Cardiac septum (tissue), 1 donor: ENCODE measurements at regions of chr18 and their contacts with region 1.

Region 1: GRCh38 chr18:45384137-45384961 is 230.9 kb upstream of the SLC14A2 start:
- DNase-seq: no peak

Region 2: DNA sequence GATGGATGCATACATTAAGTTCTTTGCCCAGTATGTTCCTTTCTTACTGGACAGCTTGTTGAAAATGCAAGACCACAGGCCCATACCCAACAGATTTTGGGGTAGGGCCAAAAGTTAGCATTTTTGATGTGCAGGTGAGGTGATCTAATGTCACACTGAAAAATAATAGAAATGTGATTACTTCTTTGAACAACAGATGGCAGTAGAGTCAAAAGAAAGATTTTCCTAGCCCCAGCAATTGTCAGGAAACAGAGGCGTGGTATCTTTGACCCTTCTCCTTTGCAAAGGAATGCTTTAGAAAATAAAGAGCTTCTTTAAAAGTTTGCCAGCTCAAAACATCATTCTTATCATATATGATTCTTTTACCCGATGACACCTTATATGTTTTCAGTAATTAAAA is 1763.4 kb before region 1 on chr18:
- intact Hi-C with region 1: loop called (anchors 10 kb)
- DNase-seq: no peak

Region 3: GRCh38 chr18:43789234-43790000 is 1594.9 kb before region 1 on chr18:
- intact Hi-C with region 1: loop called (anchors 10 kb)
- DNase-seq: no peak

Region 4: DNA sequence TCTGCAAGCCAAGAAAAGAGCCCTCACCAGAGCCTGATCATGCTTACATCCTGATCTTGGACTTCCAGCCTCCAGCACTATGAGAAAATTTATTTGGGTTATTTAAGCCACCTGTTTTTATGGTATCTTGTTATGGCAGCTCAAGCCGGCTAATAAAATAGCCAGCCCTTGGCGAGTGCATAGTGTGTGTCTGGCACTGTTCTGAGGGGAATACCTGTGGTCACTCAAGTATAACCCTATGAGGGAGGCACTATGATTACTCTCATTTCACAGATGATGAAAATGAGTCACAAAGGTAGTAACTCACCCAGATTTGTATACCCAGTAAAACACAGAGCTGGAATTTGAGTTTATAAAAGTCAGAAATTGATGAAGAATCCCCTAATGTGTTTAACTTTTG is 1260.6 kb before region 1 on chr18:
- intact Hi-C with region 1: loop called (anchors 10 kb)
- DNase-seq: no peak

Region 5: DNA sequence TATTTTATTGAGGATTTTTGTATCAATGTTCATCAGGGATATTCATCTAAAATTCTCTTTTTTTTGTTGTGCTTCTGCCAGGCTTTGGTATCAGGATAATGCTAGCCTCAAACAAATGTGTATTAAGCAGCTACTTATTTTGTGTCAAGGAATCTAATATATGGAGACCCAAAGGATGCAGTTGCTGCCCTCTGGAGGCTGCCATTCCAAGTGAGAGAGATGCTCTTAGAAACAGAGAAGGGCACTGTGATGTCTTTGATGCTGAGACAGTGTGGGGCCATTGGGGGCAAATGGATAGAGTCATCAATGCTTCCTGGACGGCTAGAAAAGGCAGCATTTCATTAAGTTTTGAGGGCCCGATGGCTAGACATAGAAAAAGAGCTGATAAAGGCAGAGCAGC is 411.1 kb before region 1 on chr18:
- intact Hi-C with region 1: no loop called
- DNase-seq: no peak

Region 6: GRCh38 chr18:45416168-45416567 is 31.8 kb after region 1 on chr18:
- intact Hi-C with region 1: no loop called
- DNase-seq: no peak